Vagina (tissue), 2 donors: ENCODE measurements at regions of chr1 and their contacts with region 1.

Region 1: DNA sequence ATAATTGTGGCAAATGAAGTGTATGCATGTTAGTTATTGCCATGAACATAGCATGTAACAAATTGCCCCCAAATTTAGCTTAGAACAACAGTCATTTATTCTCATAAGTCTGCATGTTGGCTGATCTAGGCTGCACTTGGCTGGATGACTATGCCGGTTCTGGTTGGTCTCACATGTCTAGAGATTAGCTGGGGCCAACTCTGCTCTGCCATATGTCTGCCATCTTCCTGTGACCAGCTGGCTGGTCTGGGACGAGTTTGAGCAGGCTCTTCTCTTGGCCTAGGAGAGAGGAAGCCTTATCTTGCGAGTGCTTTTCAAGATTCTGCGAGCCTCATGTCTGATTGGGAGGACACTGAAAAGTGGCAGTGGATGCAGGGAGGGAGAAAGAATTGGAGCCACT is 198.3 kb upstream of the FAM78B start:
- DNase-seq: no peak
- H3K4me3 ChIP-seq: no peak overlapping the region
- H3K27ac ChIP-seq: no peak overlapping the region
- H3K4me1 ChIP-seq: no peaks in the 10 kb centered on the region
- H3K27me3 ChIP-seq: no peaks in the 10 kb centered on the region
- CTCF ChIP-seq: no peak
- POLR2A ChIP-seq: no peak

Region 2: DNA sequence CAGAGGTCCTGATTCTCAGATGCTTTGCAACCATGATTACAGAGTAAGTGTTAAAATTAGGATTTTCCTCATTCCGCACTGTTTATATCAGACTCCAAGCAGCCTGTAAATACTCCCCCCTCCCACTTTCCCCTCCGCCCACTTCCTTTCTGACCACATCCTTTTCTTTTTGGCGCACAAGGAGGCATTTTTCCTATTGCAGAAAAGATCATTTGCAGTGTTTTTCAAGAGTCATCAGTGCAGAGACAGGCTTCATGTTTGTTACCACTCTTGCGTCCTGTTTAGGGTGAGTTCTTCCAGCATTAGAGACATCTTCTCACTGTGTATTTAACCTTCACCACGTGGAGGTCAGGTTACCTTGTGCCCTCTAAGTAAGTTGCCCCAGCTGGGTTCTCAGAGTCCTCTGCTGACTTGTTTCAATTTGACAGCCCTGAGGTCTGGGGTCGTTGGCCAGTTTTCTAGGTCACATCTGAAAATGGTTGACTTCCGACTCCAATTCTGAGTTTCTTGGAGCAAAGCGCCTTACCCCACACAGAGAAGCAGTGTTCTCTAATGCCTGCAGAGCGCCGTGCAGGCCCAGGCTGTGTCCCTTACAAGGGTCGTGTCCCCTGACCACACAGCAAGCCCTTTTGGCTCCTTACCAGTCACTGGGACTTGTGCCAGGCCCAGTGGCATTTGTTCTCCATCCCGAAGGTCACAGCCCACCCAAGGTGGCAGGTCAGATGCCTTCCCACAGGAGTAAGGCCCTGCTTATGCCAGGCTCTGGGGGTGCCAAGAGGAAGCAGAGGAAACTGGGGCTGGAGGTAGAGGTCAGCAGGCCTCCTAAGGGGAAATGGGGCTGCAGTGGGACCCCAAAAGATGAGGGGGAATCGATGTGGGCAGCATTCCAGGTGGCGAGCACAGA is 283.9 kb before region 1 on chr1:
- intact Hi-C with region 1: no loop called
- DNase-seq: peak; percentile 64 to 83
- H3K4me3 ChIP-seq: peak overlapping the region; percentile 6 to 8
- H3K27ac ChIP-seq: peak overlapping the region; percentile 9
- H3K4me1 ChIP-seq: peaks cover 16% of the 10 kb centered on the region
- H3K27me3 ChIP-seq: no peaks in the 10 kb centered on the region
- CTCF ChIP-seq: no peak
- POLR2A ChIP-seq: no peak

Region 3: GRCh38 chr1:166302989-166303758 is 61.9 kb before region 1 on chr1:
- intact Hi-C with region 1: no loop called
- DNase-seq: no peak
- H3K4me3 ChIP-seq: no peak overlapping the region
- H3K27ac ChIP-seq: no peak overlapping the region
- H3K4me1 ChIP-seq: no peaks in the 10 kb centered on the region
- H3K27me3 ChIP-seq: no peaks in the 10 kb centered on the region
- CTCF ChIP-seq: no peak
- POLR2A ChIP-seq: no peak

Region 4: DNA sequence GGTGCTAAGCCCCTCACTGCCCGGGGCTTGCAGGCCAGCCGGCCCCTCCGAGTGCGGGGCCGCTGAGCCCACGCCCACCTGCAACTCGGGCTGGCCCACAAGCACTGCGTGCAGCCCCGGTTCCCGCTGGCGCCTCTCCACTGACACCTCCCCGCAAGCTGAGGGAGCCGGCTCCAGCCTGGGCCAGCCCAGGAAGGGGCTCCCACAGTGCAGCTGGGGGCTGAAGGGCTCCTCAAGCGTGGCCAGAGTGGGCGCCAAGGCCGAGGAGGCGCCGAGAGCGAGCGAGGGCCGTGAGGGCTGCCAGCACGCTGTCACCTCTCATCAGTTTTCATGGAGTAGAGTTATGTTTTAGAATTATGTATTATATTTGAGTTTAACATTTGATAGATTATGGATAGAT is 21.8 kb before region 1 on chr1:
- intact Hi-C with region 1: no loop called
- DNase-seq: no peak
- H3K4me3 ChIP-seq: no peak overlapping the region
- H3K27ac ChIP-seq: no peak overlapping the region
- H3K4me1 ChIP-seq: no peaks in the 10 kb centered on the region
- H3K27me3 ChIP-seq: no peaks in the 10 kb centered on the region
- CTCF ChIP-seq: no peak
- POLR2A ChIP-seq: no peak

Region 5: GRCh38 chr1:166384948-166385347 is 19.9 kb after region 1 on chr1:
- intact Hi-C with region 1: loop called (anchors 1 kb)
- DNase-seq: no peak
- H3K4me3 ChIP-seq: no peak overlapping the region
- H3K27ac ChIP-seq: no peak overlapping the region
- H3K4me1 ChIP-seq: no peaks in the 10 kb centered on the region
- H3K27me3 ChIP-seq: no peaks in the 10 kb centered on the region
- CTCF ChIP-seq: no peak
- POLR2A ChIP-seq: no peak

Region 6: DNA sequence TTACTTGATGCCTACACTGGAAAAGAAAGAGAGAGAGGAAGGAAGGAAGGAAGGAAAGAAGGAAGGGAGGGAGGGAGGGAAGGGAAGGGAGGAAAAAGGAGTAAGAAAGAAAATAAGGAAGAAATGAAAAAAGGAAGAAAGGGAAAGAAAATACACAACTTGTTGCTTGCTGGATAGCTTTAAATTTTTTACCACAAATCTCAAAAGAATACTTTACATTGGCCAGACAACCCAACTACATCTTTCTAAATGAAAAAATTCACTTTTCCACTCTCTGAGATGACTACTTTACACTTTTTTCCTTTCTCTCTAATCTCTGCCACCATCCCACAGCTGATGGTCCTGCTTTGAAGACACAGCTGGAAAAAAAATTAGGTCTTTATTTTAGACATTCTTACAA is 30.6 kb after region 1 on chr1:
- intact Hi-C with region 1: no loop called
- DNase-seq: no peak
- H3K4me3 ChIP-seq: no peak overlapping the region
- H3K27ac ChIP-seq: no peak overlapping the region
- H3K4me1 ChIP-seq: no peaks in the 10 kb centered on the region
- H3K27me3 ChIP-seq: no peaks in the 10 kb centered on the region
- CTCF ChIP-seq: no peak
- POLR2A ChIP-seq: no peak